ENCODE measurements at regions of chr2 and their contacts with region 1.

Region 1: GRCh38 chr2:179129574-179130238 is 79.8 kb upstream of the CCDC141 start:
- DNase-seq: no peak
- H3K4me3 Mint-ChIP-seq: no peak overlapping the region
- H3K27ac Mint-ChIP-seq: no peak overlapping the region
- H3K4me1 Mint-ChIP-seq: peaks cover 2% of the 10 kb centered on the region
- H3K27me3 Mint-ChIP-seq: no peaks in the 10 kb centered on the region

Region 2: GRCh38 chr2:178298785-178299212 is 830.9 kb before region 1 on chr2:
- intact Hi-C with region 1: no loop called
- DNase-seq: no peak
- H3K4me3 Mint-ChIP-seq: no peak overlapping the region
- H3K27ac Mint-ChIP-seq: no peak overlapping the region
- H3K4me1 Mint-ChIP-seq: peaks cover 2% of the 10 kb centered on the region
- H3K27me3 Mint-ChIP-seq: peaks cover 9% of the 10 kb centered on the region

Region 3: GRCh38 chr2:178761759-178762371 is 367.8 kb before region 1 on chr2:
- intact Hi-C with region 1: loop called (anchors 2 kb)
- DNase-seq: no peak
- H3K4me3 Mint-ChIP-seq: no peak overlapping the region
- H3K27ac Mint-ChIP-seq: no peak overlapping the region
- H3K4me1 Mint-ChIP-seq: peaks cover 12% of the 10 kb centered on the region
- H3K27me3 Mint-ChIP-seq: no peaks in the 10 kb centered on the region

Region 4: DNA sequence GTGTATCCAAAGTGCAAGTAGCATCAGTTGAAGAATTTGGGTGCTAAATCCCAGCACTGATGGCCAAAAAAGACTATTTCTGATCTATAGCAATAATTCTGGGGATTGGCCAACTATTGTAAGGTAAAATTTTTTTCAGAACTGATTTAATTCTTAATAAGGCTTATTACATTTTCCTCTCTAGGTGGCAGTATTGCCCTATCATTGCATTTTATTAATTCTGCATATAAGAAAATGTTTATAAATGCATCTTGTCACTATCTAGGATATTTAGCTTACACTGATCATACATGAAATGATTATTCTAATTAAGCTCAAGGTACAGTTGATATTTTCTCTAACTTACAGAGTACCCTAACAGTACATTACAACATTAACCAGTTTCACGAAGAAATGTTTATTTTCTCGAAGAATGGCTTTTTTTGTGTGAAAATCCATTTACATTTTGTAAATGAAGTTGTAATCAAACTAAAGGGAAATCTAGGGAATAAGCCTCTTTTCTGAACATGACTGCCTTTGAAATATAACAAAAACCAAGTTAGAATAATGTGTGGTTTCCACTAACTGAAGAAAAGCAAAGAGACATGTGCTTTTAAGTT is 333.5 kb before region 1 on chr2:
- intact Hi-C with region 1: loop called (anchors 5 kb)
- DNase-seq: no peak
- H3K4me3 Mint-ChIP-seq: no peak overlapping the region
- H3K27ac Mint-ChIP-seq: no peak overlapping the region
- H3K4me1 Mint-ChIP-seq: peaks cover 6% of the 10 kb centered on the region
- H3K27me3 Mint-ChIP-seq: peaks cover 2% of the 10 kb centered on the region

Region 5: GRCh38 chr2:178891265-178891958 is 238.3 kb before region 1 on chr2:
- intact Hi-C with region 1: loop called (anchors 2 kb)
- DNase-seq: peak; percentile 38
- H3K4me3 Mint-ChIP-seq: no peak overlapping the region
- H3K27ac Mint-ChIP-seq: no peak overlapping the region
- H3K4me1 Mint-ChIP-seq: peaks cover 9% of the 10 kb centered on the region
- H3K27me3 Mint-ChIP-seq: no peaks in the 10 kb centered on the region

Region 6: GRCh38 chr2:179106676-179107428 is 22.9 kb before region 1 on chr2:
- intact Hi-C with region 1: no loop called
- DNase-seq: no peak
- H3K4me3 Mint-ChIP-seq: no peak overlapping the region
- H3K27ac Mint-ChIP-seq: peak overlapping the region; percentile 70
- H3K4me1 Mint-ChIP-seq: peaks cover 32% of the 10 kb centered on the region
- H3K27me3 Mint-ChIP-seq: no peaks in the 10 kb centered on the region